ENCODE measurements at regions of chr2 and their contacts with region 1.

Region 1: DNA sequence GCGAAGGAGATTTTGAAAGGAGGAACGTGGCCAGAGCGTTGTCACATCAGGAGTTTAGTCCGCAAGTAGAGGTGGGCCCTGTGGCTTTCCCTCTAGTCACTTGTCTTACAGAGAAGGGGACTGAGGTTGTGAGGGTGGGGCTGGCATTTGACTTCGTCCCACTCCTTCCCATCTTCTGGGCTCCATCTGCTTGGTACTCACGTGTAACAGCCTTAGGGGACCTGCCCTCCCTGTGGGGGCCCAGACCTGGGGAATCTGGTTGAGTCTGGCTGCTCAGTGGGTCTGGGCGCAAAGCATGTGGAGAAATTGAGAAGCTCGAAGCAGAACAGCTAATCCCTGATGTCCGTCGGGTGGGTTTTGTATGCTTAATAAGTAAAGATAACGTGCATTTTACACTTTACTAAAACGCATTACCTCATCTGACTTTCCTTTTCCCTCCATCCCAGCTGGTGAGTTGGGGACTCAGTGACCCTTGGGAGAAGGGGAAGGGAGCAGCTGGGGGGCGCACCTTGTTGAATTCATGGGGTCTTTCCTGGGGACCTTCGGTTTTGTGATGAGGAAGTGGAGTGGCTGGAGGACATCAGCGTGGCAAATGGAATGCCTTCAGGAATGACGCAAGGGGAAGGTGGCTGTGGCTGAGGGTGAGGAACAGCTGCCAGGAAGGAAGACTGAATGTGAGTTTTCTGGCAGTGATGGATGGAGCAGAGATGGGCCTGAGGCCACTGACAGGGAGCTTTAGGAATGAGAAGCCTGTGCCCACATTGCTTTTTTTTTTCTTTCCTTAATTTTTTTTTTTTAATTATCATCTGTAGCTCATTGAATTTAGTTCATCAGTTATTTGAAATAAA is 44.8 kb downstream of the ASAP2 start:
- DNase-seq: peak; percentile 82
- H3K4me3 ChIP-seq: no peak overlapping the region
- H3K27ac ChIP-seq: peak overlapping the region; percentile 95
- H3K4me1 ChIP-seq: peaks cover 71% of the 10 kb centered on the region
- H3K27me3 ChIP-seq: no peaks in the 10 kb centered on the region
- CTCF ChIP-seq: no peak

Region 2: GRCh38 chr2:9240751-9241150 is 10.6 kb before region 1 on chr2:
- CTCF ChIA-PET with region 1: no interaction called
- dilution Hi-C with region 1: no loop called
- in situ Hi-C with region 1: no loop called
- intact Hi-C with region 1: loop called (anchors 1 kb)
- DNase-seq: peak; percentile 76
- H3K4me3 ChIP-seq: no peak overlapping the region
- H3K27ac ChIP-seq: peak overlapping the region; percentile 47
- H3K4me1 ChIP-seq: peaks cover 66% of the 10 kb centered on the region
- H3K27me3 ChIP-seq: no peaks in the 10 kb centered on the region
- CTCF ChIP-seq: no peak

Region 3: DNA sequence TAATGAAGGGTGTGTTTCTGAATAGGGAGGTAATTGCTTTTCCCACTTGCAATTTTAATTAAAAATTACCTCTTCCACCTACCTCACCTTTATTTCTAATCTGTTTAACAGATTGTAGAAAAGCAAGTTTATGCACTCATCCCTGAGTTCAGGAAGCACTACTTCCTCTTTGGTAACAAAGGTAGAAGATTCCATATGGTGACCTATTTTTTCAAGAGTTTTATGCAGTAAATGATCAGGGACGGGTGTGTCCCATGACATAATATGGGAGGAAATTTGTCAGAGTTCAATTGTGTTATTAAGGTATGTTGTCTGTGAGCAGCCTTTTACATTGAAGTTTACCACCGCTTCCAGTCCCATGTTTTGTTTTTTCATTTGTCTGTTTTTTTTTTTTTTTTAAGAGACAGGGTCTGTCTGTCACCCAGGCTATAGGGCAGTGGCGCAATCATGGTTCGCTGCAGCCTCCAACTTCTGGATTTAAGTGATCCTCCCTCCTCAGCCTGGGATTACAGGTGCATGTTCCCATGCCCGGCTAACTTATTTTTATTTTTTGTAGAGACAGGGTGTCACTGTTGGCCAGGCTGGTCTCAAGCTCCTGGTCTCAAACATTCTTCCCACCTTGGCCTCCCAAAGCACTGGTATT is 23.4 kb after region 1 on chr2:
- CTCF ChIA-PET with region 1: no interaction called
- dilution Hi-C with region 1: no loop called
- in situ Hi-C with region 1: no loop called
- intact Hi-C with region 1: no loop called
- DNase-seq: no peak
- H3K4me3 ChIP-seq: no peak overlapping the region
- H3K27ac ChIP-seq: no peak overlapping the region
- H3K4me1 ChIP-seq: peaks cover 22% of the 10 kb centered on the region
- H3K27me3 ChIP-seq: no peaks in the 10 kb centered on the region
- CTCF ChIP-seq: no peak

Region 4: DNA sequence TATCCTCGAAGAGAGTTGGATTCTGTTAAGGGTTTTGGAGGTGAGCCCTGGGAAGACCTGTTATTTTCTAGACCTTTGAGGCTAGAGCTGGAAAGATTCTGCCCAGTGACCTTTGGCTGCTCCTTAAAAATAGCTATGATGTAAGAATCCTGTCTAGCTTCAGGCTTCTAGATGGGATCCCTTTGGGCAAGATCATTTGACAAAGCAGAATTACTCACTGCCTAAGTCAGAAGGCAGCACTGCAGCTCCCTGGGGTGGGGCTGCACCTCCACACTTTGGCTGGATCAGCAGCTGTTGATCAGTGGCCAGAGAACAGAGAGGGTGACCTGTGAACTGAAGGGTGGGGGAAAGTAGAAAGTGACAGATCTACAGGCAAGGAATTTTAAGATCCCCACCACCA is 59.0 kb after region 1 on chr2:
- CTCF ChIA-PET with region 1: no interaction called
- dilution Hi-C with region 1: no loop called
- in situ Hi-C with region 1: no loop called
- intact Hi-C with region 1: loop called (anchors 1 kb)
- DNase-seq: peak; percentile 93
- H3K4me3 ChIP-seq: no peak overlapping the region
- H3K27ac ChIP-seq: peak overlapping the region; percentile 95
- H3K4me1 ChIP-seq: peaks cover 69% of the 10 kb centered on the region
- H3K27me3 ChIP-seq: no peaks in the 10 kb centered on the region
- CTCF ChIP-seq: no peak